ENCODE measurements at regions of chr11 and their contacts with region 1.

Region 1: GRCh38 chr11:102007567-102008437 is 39.4 kb upstream of the CFAP300 start:
- DNase-seq: peak; percentile 39
- H3K4me3 ChIP-seq: no peak overlapping the region
- H3K27ac ChIP-seq: no peak overlapping the region
- H3K4me1 ChIP-seq: peaks cover 0 to 18% of the 10 kb centered on the region in 2 experiments; a peak in 2 of 4 replicates
- H3K27me3 ChIP-seq: no peaks in the 10 kb centered on the region
- CTCF ChIP-seq: peak; percentile 66
- EP300 ChIP-seq: no peak
- RAD21 ChIP-seq: peak; percentile 77

Region 2: GRCh38 chr11:101848262-101848661 is 159.5 kb before region 1 on chr11:
- CTCF ChIA-PET with region 1: interaction called, 10 read pairs
- POLR2A ChIA-PET with region 1: no interaction called
- DNase-seq: no peak
- H3K4me3 ChIP-seq: no peak overlapping the region
- H3K27ac ChIP-seq: no peak overlapping the region
- H3K4me1 ChIP-seq: no peaks in the 10 kb centered on the region; a peak in 1 of 4 replicates
- H3K27me3 ChIP-seq: no peaks in the 10 kb centered on the region
- CTCF ChIP-seq: peak; percentile 68
- EP300 ChIP-seq: no peak
- RAD21 ChIP-seq: peak; percentile 40; the same call in 1 of the 2 replicates

Region 3: DNA sequence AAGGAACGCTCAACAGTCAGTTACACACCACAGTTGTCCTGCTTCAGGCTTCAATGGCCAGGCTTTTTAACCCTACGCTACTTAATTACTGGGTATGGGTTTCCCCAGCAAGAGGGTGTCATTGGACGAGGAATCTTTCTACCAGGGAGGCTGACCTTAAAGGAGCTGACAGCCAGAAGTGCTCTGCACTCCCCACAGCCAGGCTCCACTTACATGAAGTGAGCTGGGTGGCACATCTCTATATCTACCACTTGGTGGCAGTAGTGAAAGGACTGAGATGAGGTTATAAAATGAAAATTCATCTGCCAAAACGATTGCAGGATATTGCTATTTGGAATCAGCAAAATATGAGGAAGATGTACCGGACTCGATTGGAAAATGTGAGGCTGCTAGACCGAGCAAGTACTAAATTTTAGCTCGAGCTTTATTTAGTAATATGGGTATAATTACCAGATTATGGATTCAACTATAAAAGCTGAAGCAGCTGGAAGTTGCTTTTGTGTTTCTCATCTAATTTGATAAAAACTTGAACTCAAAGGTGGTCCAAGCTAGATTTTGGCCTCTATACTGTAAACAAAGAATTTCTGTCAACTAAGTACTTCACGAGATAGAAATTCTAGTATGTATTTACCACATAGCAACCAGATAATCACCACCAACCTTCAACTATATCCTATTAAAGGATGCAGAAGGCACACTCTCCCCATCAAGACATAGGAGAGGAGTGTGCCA is 146.9 kb before region 1 on chr11:
- CTCF ChIA-PET with region 1: interaction called, 263 read pairs
- POLR2A ChIA-PET with region 1: no interaction called
- DNase-seq: peak; percentile 30
- H3K4me3 ChIP-seq: no peak overlapping the region; a peak in 1 of 4 replicates
- H3K27ac ChIP-seq: no peak overlapping the region
- H3K4me1 ChIP-seq: peaks cover 0 to 11% of the 10 kb centered on the region in 2 experiments; a peak in 1 of 4 replicates
- H3K27me3 ChIP-seq: no peaks in the 10 kb centered on the region
- CTCF ChIP-seq: peak; percentile 85
- EP300 ChIP-seq: no peak
- RAD21 ChIP-seq: peak; percentile 73

Region 4: DNA sequence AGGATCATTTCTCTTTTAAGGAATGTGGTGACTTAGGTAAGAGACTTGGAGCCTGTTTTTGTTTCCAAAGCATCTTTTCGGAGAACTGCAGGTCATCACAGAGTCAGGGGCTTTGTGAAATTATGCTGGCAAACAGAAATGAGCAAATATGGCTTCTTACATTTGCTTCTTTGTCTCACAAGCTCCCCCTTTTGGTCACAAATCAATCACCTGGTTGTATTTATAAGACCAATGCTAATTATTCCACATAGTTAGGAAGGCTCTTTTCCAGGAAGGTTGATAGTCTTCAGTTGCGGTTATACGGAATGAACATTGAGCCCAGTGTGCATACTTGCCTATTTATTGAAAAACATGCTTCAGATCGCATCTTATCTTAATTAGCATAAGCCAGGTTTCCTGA is 127.6 kb before region 1 on chr11:
- CTCF ChIA-PET with region 1: interaction called, 32 read pairs
- POLR2A ChIA-PET with region 1: no interaction called
- DNase-seq: peak; percentile 8
- H3K4me3 ChIP-seq: no peak overlapping the region
- H3K27ac ChIP-seq: no peak overlapping the region
- H3K4me1 ChIP-seq: no peaks in the 10 kb centered on the region
- H3K27me3 ChIP-seq: no peaks in the 10 kb centered on the region
- CTCF ChIP-seq: peak; percentile 67
- EP300 ChIP-seq: no peak
- RAD21 ChIP-seq: peak; percentile 28

Region 5: DNA sequence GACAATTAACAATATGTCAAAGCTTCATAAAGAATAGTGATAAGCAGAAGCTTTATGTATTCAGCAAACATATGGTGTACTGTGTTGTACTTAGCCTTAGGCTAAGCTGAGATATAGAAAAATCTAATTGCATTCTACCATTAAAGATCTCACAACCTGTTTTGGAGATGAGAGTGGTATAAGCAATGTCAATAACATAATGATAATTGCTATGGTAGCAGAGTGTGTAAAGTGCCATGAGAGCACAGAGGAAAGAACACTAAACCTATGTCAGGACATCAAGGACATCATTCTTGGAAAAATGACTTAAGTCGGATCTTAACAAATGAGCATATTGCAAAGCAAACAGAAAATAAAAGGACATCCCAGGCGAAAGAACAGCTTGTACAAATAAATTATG is 62.9 kb before region 1 on chr11:
- CTCF ChIA-PET with region 1: interaction called, 11 read pairs
- POLR2A ChIA-PET with region 1: no interaction called
- DNase-seq: peak; percentile 43
- H3K4me3 ChIP-seq: no peak overlapping the region
- H3K27ac ChIP-seq: no peak overlapping the region
- H3K4me1 ChIP-seq: no peaks in the 10 kb centered on the region; a peak in 1 of 4 replicates
- H3K27me3 ChIP-seq: no peaks in the 10 kb centered on the region
- CTCF ChIP-seq: no peak
- EP300 ChIP-seq: no peak
- RAD21 ChIP-seq: no peak

Region 6: GRCh38 chr11:101974255-101974654 is 33.5 kb before region 1 on chr11:
- CTCF ChIA-PET with region 1: interaction called, 11 read pairs
- POLR2A ChIA-PET with region 1: no interaction called
- DNase-seq: no peak
- H3K4me3 ChIP-seq: no peak overlapping the region
- H3K27ac ChIP-seq: no peak overlapping the region
- H3K4me1 ChIP-seq: no peaks in the 10 kb centered on the region
- H3K27me3 ChIP-seq: no peaks in the 10 kb centered on the region
- CTCF ChIP-seq: peak; percentile 52
- EP300 ChIP-seq: no peak
- RAD21 ChIP-seq: peak; percentile 58

Region 7: DNA sequence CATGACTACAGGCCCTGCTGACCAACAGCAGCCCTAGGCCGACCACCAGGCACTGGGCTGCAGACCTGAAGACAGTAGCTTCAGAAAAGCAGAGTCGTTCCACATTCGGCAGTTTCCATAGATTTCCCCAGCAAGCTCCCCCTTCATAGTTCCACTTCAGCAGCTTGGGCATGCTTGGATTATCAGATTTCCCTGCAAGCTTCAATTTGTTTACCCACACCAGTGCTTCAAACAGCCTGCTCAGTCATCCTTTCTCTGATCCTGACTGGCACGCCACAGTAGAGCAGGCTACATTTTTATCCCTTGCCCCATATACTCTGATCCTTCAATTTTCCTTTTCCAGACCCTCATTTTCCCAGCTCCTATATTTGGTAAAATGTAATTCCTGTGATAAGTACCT is 11.7 kb before region 1 on chr11:
- CTCF ChIA-PET with region 1: interaction called, 21 read pairs
- POLR2A ChIA-PET with region 1: no interaction called
- DNase-seq: no peak
- H3K4me3 ChIP-seq: no peak overlapping the region
- H3K27ac ChIP-seq: no peak overlapping the region
- H3K4me1 ChIP-seq: no peaks in the 10 kb centered on the region
- H3K27me3 ChIP-seq: no peaks in the 10 kb centered on the region
- CTCF ChIP-seq: no peak
- EP300 ChIP-seq: no peak
- RAD21 ChIP-seq: no peak

Measured in SK-N-SH (cell line).